ENCODE measurements at regions of chr12 and their contacts with region 1.

Region 1: GRCh38 chr12:1795785-1796514 is 24.4 kb upstream of the LRTM2 start:
- DNase-seq: peak; percentile 95
- H3K4me3 ChIP-seq: peak overlapping the region; percentile 81
- H3K27ac ChIP-seq: peak overlapping the region; percentile 84
- H3K4me1 ChIP-seq: peaks cover 4% of the 10 kb centered on the region
- H3K27me3 ChIP-seq: no peaks in the 10 kb centered on the region
- CTCF ChIP-seq: peak; percentile 98

Region 2: DNA sequence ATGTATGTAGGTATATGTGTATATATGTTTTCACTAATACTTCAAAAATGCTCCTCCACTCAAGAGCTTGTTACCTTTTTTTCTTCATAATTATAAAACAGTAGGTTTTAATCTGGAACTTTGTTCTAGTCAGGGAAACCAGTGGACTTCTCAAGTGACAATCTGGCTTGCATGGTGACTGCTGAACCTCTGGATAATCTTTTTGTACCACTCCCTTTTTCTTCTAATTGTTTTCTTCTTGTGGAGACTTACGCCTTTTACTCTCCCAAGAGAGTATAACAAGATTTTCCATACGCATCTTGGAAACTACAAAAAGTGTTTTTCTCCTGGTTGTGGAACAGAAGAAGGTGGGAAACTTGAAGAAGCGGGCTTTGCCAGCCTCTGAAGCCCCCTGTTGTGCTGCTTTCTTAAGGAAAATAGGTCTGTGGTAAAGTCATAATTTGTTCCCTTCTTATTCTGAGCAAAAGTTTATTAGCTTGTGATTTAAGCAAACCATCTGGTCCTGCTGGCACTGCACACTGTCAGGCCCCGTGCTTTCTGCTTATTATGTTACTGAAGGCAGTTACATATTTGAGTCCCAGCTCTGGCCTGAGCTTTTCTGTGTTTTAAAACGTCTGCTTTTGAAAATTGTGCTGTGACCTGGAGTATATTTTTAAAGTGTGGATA is 513.1 kb before region 1 on chr12:
- intact Hi-C with region 1: no loop called
- DNase-seq: peak; percentile 35
- H3K4me3 ChIP-seq: no peak overlapping the region
- H3K27ac ChIP-seq: no peak overlapping the region
- H3K4me1 ChIP-seq: no peaks in the 10 kb centered on the region
- H3K27me3 ChIP-seq: no peaks in the 10 kb centered on the region
- CTCF ChIP-seq: no peak

Region 3: DNA sequence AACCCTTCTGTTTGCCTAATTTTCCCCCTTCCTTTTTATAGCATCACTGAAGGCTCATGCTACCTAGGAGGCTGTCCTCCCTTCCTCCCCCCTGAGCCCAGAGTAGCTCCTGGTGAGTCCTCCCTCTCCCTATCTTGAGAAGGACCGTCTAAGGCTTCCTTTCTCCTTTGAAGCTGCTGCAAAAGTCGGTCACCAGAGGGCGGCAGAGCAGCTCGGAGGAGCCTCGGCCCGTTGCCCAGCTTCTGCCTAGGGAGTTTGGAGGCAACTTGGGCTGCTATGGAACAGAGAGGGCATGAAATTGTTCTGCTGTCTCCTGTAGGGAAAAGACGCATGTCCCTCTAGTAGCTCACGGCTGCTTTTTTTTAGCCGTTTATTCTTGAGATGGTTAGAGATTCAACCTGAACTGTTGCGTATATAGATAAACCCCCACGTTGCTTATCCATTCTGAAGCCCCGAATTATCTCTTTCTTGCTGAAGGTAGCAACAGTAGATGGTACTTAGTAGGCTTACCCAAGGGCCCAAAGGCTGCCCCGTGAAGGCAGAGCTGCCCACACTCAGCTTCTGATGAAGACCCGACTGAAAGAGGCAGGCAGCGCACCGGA is 161.3 kb before region 1 on chr12:
- intact Hi-C with region 1: loop called (anchors 5 kb)
- DNase-seq: peak; percentile 77
- H3K4me3 ChIP-seq: no peak overlapping the region
- H3K27ac ChIP-seq: no peak overlapping the region
- H3K4me1 ChIP-seq: peaks cover 11% of the 10 kb centered on the region
- H3K27me3 ChIP-seq: peaks cover 18% of the 10 kb centered on the region
- CTCF ChIP-seq: peak; percentile 66

Region 4: GRCh38 chr12:1655225-1655788 is 140.6 kb before region 1 on chr12:
- intact Hi-C with region 1: loop called (anchors 2 kb)
- DNase-seq: peak; percentile 52
- H3K4me3 ChIP-seq: no peak overlapping the region
- H3K27ac ChIP-seq: no peak overlapping the region
- H3K4me1 ChIP-seq: no peaks in the 10 kb centered on the region
- H3K27me3 ChIP-seq: no peaks in the 10 kb centered on the region
- CTCF ChIP-seq: no peak

Region 5: DNA sequence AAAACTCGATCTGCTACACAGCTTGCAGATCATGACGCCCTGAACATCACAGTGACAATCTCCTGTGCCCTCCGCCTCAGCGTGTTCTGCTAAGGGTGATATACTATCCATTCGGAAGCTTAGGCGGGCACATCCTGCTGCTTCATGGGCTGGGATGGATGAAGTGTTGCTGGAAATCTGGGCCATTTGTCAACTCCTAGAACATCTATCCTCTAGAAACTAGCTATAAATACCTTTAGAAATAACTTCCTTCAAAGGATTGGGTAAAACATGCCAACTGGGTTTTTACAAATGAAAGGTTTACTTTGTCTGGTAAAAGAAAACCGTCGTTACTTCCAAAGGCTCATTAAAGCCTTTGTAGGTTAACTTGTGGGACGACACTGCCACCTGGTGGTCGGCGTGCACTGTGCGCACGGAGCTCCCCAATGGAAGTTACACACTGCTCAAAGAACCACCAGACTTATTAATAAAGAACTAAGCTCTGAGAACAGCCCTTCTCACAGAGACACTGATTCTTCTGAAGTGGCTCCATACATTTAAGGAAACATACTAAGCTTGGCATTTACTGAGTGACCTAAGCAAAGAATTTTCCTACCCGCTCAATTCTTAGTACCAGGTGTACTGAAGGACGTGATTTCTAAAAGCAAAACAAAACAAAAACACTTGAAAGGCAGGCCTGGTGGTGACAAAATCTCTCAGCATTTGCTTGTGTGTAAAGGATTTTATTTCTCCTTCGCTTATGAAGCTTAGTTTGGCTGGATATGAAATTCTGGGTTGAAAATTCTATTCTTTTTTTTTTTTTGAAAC is 144.1 kb after region 1 on chr12:
- intact Hi-C with region 1: loop called (anchors 2 kb)
- DNase-seq: peak; percentile 95
- H3K4me3 ChIP-seq: peak overlapping the region; percentile 2
- H3K27ac ChIP-seq: peak overlapping the region; percentile 74
- H3K4me1 ChIP-seq: peaks cover 4% of the 10 kb centered on the region
- H3K27me3 ChIP-seq: no peaks in the 10 kb centered on the region
- CTCF ChIP-seq: peak; percentile 98

Region 6: DNA sequence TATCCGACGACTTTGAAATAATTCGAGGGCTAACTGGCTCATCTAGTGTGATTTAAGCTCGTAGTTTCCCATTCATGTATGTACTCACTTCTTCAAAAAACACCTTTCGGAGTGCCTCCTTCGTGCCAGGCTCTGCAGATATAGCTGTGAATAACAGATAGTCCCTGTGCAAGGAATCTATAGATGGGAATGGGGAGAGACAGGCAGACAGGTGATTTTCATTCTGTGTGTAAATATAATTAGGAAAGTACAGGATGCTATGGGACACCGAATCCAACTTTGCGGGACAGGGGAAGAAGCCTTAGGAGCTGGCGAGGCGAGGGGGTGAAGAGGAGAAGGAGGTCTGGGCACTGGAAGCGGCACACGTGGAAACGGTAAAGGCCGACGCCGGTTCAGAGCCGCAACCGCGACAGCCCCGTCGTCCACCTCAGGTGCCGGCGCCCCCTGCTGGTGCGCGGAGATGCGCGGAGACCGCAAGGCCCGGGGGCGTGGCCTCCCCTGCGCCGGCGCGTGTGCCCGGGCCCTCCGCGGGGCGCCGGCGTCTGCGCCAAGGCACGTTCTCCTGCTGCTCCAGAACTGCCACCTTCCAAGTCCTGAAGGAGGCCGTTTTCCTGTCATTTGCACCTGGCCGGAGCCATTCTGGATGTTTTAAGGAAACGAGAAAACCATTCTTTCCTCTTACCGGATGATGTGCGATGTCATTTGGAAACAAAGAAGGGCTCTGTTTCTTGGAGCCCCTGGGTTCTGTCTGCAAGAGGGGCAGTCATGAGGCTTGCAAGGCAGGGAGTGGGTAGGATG is 238.9 kb after region 1 on chr12:
- intact Hi-C with region 1: loop called (anchors 5 kb)
- DNase-seq: peak; percentile 91
- H3K4me3 ChIP-seq: peak overlapping the region; percentile 19
- H3K27ac ChIP-seq: no peak overlapping the region
- H3K4me1 ChIP-seq: no peaks in the 10 kb centered on the region
- H3K27me3 ChIP-seq: no peaks in the 10 kb centered on the region
- CTCF ChIP-seq: peak; percentile 94

Region 7: DNA sequence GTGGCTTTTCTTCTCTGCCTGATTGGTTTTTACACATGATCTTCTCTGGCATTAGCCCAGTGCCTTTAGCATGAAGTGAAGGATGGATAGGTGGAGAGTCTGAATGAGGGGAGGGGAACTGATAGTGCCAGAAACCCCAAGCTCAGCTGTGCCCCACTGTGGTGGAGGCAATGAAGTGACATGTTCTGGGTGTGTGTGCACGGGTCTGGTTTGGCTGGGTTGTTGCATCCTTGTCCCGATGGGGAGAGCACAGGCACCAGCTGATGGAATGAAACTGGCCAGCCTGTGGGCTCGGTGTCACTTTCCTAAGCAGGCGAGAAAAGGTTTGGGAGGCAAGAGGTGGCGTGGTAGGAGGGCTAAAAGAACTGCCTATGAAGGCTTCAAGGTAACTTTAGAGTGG is 322.1 kb after region 1 on chr12:
- intact Hi-C with region 1: no loop called
- DNase-seq: no peak
- H3K4me3 ChIP-seq: no peak overlapping the region
- H3K27ac ChIP-seq: no peak overlapping the region
- H3K4me1 ChIP-seq: no peaks in the 10 kb centered on the region
- H3K27me3 ChIP-seq: no peaks in the 10 kb centered on the region
- CTCF ChIP-seq: no peak